Sciatic nerve (tissue), 2 donors: ENCODE measurements at regions of chr2 and their contacts with region 1.

Region 1: DNA sequence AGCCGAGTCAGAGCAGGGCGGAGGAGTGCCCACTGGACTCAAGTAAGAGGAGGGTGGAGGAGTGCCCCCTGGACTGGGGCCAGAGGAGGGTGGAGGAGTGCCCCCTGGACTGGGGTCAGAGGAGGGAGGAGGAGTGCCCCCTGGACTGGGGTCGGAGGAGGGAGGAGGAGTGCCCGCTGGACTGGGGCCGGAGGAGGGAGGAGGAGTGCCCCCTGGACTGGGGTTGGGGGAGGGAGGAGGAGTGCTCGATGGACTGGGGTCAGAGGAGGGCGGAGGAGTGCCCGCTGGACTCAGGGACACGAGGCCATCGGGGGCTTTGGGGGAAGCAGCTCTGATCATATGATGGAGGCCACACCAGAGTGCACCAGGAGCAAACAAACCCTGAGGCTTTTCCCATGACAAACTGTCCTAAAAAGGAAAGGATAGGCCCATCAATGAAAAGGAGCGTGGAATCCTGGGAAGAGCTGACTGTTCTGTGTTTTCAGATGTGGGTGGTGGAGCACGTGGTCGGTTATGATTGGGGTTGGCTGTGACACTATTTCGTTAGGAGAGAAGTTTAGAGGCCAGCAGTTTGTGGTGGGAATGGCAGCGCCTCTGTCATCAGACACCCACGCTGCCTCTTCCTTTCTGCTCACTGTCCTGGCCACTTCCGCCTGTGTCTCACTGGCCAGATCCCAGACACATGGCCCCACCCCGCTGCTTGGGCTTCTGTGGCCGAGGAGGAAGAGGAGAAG is 24.5 kb upstream of the HPCAL1 start:
- DNase-seq: peak; percentile 84
- ATAC-seq: peak; percentile 91

Region 2: DNA sequence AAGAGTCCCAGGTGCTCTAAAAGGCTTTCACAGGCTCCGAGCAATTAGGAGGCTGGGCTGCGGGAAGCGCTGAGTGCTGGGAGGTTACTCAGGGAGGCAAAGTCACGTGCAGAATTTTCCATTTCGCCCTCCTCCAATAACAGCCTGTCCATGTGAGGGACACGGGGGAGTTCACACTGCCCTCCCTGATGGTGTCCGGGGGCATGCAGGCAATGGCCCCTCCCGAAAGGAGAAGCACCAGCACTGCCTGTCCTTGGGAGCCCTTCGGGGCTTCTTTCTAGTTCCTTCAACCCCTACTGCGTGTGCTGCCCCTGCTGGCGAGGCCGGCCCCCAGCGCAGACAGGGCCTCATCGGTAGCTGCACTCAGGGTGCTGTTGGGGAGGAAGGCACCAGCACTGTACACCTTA is 38.6 kb before region 1 on chr2:
- intact Hi-C with region 1: no loop called
- DNase-seq: peak; percentile 26
- ATAC-seq: no peak

Region 3: GRCh38 chr2:10408649-10409579 is 130.7 kb after region 1 on chr2:
- intact Hi-C with region 1: loop called (anchors 10 kb)
- DNase-seq: peak; percentile 86
- ATAC-seq: peak; percentile 84